ENCODE measurements at regions of chr14 and their contacts with region 1.

Region 1: DNA sequence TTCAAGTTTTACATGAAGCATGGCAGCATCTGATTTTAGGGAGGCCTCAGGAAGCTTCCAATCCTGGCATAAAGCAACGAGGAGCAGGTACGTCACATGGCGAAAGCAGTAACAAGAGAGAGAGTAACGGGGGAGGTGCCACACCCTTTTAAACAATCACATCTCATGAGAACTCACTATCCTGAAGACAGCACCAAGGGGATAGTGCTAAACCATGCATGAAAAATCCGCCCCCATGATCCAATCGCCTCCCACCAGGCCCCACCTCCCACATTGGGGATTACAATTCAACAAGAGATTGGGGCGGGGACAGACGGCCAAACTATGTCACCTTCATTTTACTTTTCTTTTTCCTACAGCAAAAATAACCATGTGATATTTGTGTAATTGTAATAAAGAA is 7.2 kb upstream of the MAP3K9 start:
- DNase-seq: no peak

Region 2: GRCh38 chr14:70595443-70596185 is 220.9 kb before region 1 on chr14:
- intact Hi-C with region 1: no loop called
- DNase-seq: peak in 2 of 10 donors; percentile 48 to 60

Region 3: GRCh38 chr14:70780396-70781075 is 36.0 kb before region 1 on chr14:
- intact Hi-C with region 1: loop called (anchors 2 kb)
- DNase-seq: peak in 7 of 10 donors; percentile 16 to 92 (median 49)

Region 4: GRCh38 chr14:70972107-70972976 is 155.8 kb after region 1 on chr14:
- intact Hi-C with region 1: loop called (anchors 2 kb)
- DNase-seq: peak; percentile 38 to 95 (median 85)